Endothelial cell of umbilical vein (primary cell): ENCODE measurements at regions of chr19 and their contacts with region 1.

Region 1: DNA sequence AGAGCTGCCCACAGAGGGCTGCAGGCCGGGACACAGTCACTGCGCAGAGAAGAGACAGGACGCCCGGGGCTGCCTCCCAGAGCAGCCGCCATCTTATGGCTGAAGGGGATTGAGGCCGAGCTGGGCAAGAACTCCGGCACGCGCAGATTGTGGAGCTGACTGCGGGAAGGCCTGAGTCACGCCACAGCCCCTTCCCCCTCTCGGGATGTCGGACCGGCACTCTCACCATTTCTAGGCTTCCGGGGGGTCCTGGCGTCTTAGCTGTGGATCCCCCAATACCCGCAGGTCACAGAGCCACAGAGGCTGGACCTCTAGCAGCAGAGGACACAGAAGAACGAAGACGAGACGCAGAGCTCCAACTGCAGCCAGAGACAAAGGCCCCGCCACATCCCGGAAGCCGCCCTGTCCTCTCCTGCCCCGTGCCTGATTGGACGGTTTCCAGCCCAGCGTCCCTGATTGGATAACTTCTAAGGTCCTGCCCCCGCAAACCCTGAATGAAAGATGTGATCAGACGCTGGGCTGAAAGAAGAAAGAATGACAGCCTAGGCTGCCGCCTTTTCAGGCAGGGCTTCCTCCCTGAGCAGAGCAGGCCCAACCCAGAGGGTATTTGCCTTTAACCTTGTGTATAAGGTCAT is at the start of gene ZNF43:
- DNase-seq: peak; percentile 91
- H3K4me3 ChIP-seq: peak within 1 kb of the TSS; percentile 50 to 74 (median 56)
- H3K27ac ChIP-seq: peak within 1 kb of the TSS; percentile 84
- H3K4me1 ChIP-seq: no peaks in the 10 kb centered on the region
- H3K27me3 ChIP-seq: no peaks in the 10 kb centered on the region
- CTCF ChIP-seq: no peak
- POLR2A ChIP-seq: peak; percentile 92
- total RNA-seq, gene ZNF43: 20.2 and 21.1 TPM in 2 replicates

Region 2: DNA sequence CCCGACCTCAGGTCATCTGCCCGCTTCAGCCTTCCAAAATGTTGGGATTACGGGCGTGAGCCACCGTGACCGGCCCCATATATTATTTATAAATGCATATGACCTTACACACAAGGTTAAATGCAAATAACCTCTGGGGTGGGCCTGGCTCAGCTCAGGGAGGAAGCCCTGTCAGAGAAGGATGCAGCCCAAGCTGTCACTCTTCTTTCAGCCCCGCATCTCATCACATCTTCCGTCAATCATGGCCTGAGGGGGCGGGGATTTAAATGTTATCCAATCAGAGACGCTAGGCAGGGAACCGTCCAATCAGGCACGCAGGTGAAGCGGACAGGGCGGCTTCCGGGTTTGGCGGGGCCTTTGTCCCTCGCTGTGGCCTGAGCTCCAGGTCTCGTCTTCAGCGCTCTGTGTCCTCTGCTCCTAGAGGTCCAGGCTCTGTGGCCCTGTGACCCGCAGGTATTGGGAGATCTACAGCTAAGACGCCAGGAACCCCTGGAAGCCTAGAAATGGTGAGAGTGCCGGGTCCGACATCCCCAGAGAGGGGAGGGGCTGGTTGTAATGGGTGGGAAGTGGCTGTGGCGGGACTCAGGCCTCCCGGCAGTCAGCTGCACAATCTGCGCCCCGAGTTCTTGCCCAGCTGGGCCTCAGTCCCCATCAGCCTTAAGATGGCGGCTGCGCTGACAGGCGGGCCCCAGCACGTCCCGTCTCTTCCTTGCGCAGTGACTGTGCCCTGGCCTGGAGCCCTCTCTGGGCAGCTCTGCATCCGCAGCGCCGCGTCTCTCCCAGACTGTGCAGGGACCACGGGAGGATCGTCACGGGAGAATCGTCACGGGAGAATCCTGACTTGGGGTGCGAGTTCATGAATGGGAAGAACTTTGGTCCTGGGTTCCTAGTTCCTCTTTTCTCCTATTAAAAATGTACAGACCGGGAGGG is 815.4 kb before region 1 on chr19 and contains the start of gene ZNF430:
- CTCF ChIA-PET with region 1: no interaction called
- POLR2A ChIA-PET with region 1: no interaction called
- dilution Hi-C with region 1: no loop called
- intact Hi-C with region 1: loop called (anchors 10 kb)
- DNase-seq: peak; percentile 93
- H3K4me3 ChIP-seq: peak within 1 kb of the TSS; percentile 86 to 89 (median 87)
- H3K27ac ChIP-seq: peak within 1 kb of the TSS; percentile 75
- H3K4me1 ChIP-seq: peaks cover 3% of the 10 kb centered on the region
- H3K27me3 ChIP-seq: no peaks in the 10 kb centered on the region
- CTCF ChIP-seq: no peak
- POLR2A ChIP-seq: peak; percentile 48
- total RNA-seq, gene ZNF430: 11.1 and 13.4 TPM in 2 replicates

Region 3: GRCh38 chr19:21691661-21692060 is 144.3 kb before region 1 on chr19:
- CTCF ChIA-PET with region 1: no interaction called
- POLR2A ChIA-PET with region 1: no interaction called
- dilution Hi-C with region 1: no loop called
- intact Hi-C with region 1: no loop called
- DNase-seq: no peak
- H3K4me3 ChIP-seq: no peak overlapping the region
- H3K27ac ChIP-seq: no peak overlapping the region
- H3K4me1 ChIP-seq: no peaks in the 10 kb centered on the region
- H3K27me3 ChIP-seq: no peaks in the 10 kb centered on the region
- CTCF ChIP-seq: no peak
- POLR2A ChIP-seq: no peak

Region 4: GRCh38 chr19:21823224-21823623 is 12.7 kb before region 1 on chr19:
- CTCF ChIA-PET with region 1: no interaction called
- POLR2A ChIA-PET with region 1: no interaction called
- dilution Hi-C with region 1: no loop called
- intact Hi-C with region 1: no loop called
- DNase-seq: no peak
- H3K4me3 ChIP-seq: no peak overlapping the region
- H3K27ac ChIP-seq: no peak overlapping the region
- H3K4me1 ChIP-seq: no peaks in the 10 kb centered on the region
- H3K27me3 ChIP-seq: no peaks in the 10 kb centered on the region
- CTCF ChIP-seq: no peak
- POLR2A ChIP-seq: no peak

Region 5: GRCh38 chr19:21851596-21852345 is 15.8 kb after region 1 on chr19:
- CTCF ChIA-PET with region 1: interaction called, 19 read pairs
- POLR2A ChIA-PET with region 1: interaction called, 24 read pairs
- dilution Hi-C with region 1: no loop called
- intact Hi-C with region 1: loop called (anchors 1 kb)
- DNase-seq: peak; percentile 95
- H3K4me3 ChIP-seq: peak overlapping the region; percentile 68 to 82 (median 82)
- H3K27ac ChIP-seq: peak overlapping the region; percentile 84
- H3K4me1 ChIP-seq: peaks cover 6% of the 10 kb centered on the region
- H3K27me3 ChIP-seq: no peaks in the 10 kb centered on the region
- CTCF ChIP-seq: no peak
- POLR2A ChIP-seq: no peak

Region 6: GRCh38 chr19:21900372-21900771 is 64.4 kb after region 1 on chr19:
- CTCF ChIA-PET with region 1: no interaction called
- POLR2A ChIA-PET with region 1: no interaction called
- dilution Hi-C with region 1: no loop called
- intact Hi-C with region 1: no loop called
- DNase-seq: no peak
- H3K4me3 ChIP-seq: no peak overlapping the region
- H3K27ac ChIP-seq: no peak overlapping the region
- H3K4me1 ChIP-seq: no peaks in the 10 kb centered on the region
- H3K27me3 ChIP-seq: no peaks in the 10 kb centered on the region
- CTCF ChIP-seq: no peak
- POLR2A ChIP-seq: no peak